CD8-positive, alpha-beta T cell (primary cell): ENCODE measurements at regions of chr1 and their contacts with region 1.

Region 1: GRCh38 chr1:194295685-194296084 is 1109.3 kb upstream of the B3GALT2 start:
- DNase-seq: peak in 7 of 9 experiments; percentile 7 to 80 (median 39)
- ATAC-seq: peak; percentile 98
- H3K4me3 ChIP-seq: no peak overlapping the region
- H3K4me3 Mint-ChIP-seq: no peak overlapping the region
- H3K27ac ChIP-seq: no peak overlapping the region
- H3K27ac Mint-ChIP-seq: no peak overlapping the region
- H3K4me1 ChIP-seq: peaks cover 6% of the 10 kb centered on the region
- H3K4me1 Mint-ChIP-seq: peaks cover 14% of the 10 kb centered on the region
- H3K27me3 ChIP-seq: no peaks in the 10 kb centered on the region
- H3K27me3 Mint-ChIP-seq: no peaks in the 10 kb centered on the region
- CTCF ChIP-seq: peak; percentile 75

Region 2: GRCh38 chr1:192609110-192610079 is 1686.3 kb before region 1 on chr1:
- CTCF ChIA-PET with region 1: no interaction called
- POLR2A ChIA-PET with region 1: no interaction called
- intact Hi-C with region 1: loop called in 1 of 2 experiments (anchors 10 kb)
- DNase-seq: peak; percentile 24 to 88 (median 58)
- ATAC-seq: peak; percentile 95
- H3K4me3 ChIP-seq: no peak overlapping the region
- H3K4me3 Mint-ChIP-seq: peak overlapping the region; percentile 69
- H3K27ac ChIP-seq: peak overlapping the region; percentile 20 to 57
- H3K27ac Mint-ChIP-seq: peak overlapping the region; percentile 86
- H3K4me1 ChIP-seq: peaks cover 14% of the 10 kb centered on the region
- H3K4me1 Mint-ChIP-seq: peaks cover 16% of the 10 kb centered on the region
- H3K27me3 ChIP-seq: peaks cover 0 to 3% of the 10 kb centered on the region in 2 experiments
- H3K27me3 Mint-ChIP-seq: no peaks in the 10 kb centered on the region
- CTCF ChIP-seq: no peak

Region 3: DNA sequence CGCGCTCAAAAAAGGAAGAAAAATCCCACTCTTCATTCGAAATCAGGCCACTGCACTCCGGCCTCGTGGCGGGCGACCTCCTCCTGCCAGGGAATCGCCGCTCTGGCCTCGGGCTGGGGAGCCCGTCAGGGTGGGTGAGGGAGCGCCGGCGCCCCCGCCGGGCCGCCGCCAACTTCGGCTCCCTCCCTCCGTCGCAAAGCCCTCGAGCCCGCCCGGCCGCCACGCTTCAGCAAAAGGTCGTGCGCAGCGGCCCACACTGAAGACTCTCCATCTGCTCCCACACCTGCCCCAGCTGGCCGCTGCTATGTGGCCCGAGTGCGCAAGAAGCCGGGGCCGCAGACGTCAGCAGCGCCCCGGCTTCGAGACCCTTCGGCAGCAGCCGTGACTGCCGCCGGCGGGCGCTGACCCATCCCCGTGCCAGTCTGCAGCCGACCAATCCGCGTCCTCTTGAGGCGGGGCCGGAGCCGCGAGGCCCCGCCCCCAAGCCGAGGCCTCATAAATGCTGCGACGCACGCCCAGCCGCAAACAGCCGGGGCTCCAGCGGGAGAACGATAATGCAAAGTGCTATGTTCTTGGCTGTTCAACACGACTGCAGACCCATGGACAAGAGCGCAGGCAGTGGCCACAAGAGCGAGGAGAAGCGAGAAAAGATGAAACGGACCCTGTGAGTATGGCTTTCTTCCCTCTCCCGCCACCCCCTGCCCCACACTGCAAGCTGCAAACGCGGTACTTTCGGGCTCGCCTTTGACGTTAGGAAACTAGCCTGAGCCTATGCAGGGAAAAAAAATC is 1487.0 kb before region 1 on chr1 and contains the start of gene RGS2:
- CTCF ChIA-PET with region 1: no interaction called
- POLR2A ChIA-PET with region 1: no interaction called
- intact Hi-C with region 1: loop called (anchors 2 to 5 kb)
- DNase-seq: peak; percentile 80 to 95 (median 87)
- ATAC-seq: peak; percentile 88
- H3K4me3 ChIP-seq: peak within 1 kb of the TSS; percentile 69 to 96
- H3K4me3 Mint-ChIP-seq: peak within 1 kb of the TSS; percentile 97
- H3K27ac ChIP-seq: peak within 1 kb of the TSS; percentile 66 to 81
- H3K27ac Mint-ChIP-seq: peak within 1 kb of the TSS; percentile 96
- H3K4me1 ChIP-seq: peaks cover 20% of the 10 kb centered on the region
- H3K4me1 Mint-ChIP-seq: peaks cover 29% of the 10 kb centered on the region
- H3K27me3 ChIP-seq: no peaks in the 10 kb centered on the region
- H3K27me3 Mint-ChIP-seq: no peaks in the 10 kb centered on the region
- CTCF ChIP-seq: no peak
- total RNA-seq, gene RGS2: 221 to 234 TPM

Region 4: DNA sequence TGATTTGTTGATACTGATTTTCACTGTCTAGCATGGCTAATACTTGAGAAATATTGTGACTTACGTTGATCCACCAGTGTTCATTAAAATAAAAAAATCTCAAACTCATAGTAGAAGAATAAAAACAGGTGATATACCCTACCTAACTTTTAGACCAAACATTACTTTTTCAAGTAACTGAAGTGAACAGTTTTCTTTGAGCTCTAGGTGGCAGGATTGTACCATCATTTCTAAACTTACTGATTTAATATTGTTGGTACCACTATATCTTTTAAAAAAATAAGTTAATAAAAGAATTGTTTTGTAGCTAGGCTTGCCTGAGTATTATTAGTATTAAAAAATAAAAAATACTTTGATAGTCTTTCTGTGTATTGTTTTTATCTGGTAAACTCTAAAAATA is 1152.4 kb before region 1 on chr1:
- CTCF ChIA-PET with region 1: interaction called, 4 read pairs
- POLR2A ChIA-PET with region 1: no interaction called
- intact Hi-C with region 1: loop called in 1 of 2 experiments (anchors 1 kb)
- DNase-seq: peak in 1 of 9 experiments; percentile 28
- ATAC-seq: no peak
- H3K4me3 ChIP-seq: no peak overlapping the region
- H3K4me3 Mint-ChIP-seq: no peak overlapping the region
- H3K27ac ChIP-seq: no peak overlapping the region
- H3K27ac Mint-ChIP-seq: no peak overlapping the region
- H3K4me1 ChIP-seq: no peaks in the 10 kb centered on the region
- H3K4me1 Mint-ChIP-seq: peaks cover 17% of the 10 kb centered on the region
- H3K27me3 ChIP-seq: no peaks in the 10 kb centered on the region
- H3K27me3 Mint-ChIP-seq: no peaks in the 10 kb centered on the region
- CTCF ChIP-seq: peak; percentile 23

Region 5: GRCh38 chr1:193260896-193261295 is 1034.8 kb before region 1 on chr1:
- CTCF ChIA-PET with region 1: no interaction called
- POLR2A ChIA-PET with region 1: no interaction called
- intact Hi-C with region 1: loop called (anchors 10 kb)
- DNase-seq: no peak
- ATAC-seq: no peak
- H3K4me3 ChIP-seq: no peak overlapping the region
- H3K4me3 Mint-ChIP-seq: no peak overlapping the region
- H3K27ac ChIP-seq: no peak overlapping the region
- H3K27ac Mint-ChIP-seq: no peak overlapping the region
- H3K4me1 ChIP-seq: no peaks in the 10 kb centered on the region
- H3K4me1 Mint-ChIP-seq: peaks cover 2% of the 10 kb centered on the region
- H3K27me3 ChIP-seq: no peaks in the 10 kb centered on the region
- H3K27me3 Mint-ChIP-seq: no peaks in the 10 kb centered on the region
- CTCF ChIP-seq: no peak

Region 6: DNA sequence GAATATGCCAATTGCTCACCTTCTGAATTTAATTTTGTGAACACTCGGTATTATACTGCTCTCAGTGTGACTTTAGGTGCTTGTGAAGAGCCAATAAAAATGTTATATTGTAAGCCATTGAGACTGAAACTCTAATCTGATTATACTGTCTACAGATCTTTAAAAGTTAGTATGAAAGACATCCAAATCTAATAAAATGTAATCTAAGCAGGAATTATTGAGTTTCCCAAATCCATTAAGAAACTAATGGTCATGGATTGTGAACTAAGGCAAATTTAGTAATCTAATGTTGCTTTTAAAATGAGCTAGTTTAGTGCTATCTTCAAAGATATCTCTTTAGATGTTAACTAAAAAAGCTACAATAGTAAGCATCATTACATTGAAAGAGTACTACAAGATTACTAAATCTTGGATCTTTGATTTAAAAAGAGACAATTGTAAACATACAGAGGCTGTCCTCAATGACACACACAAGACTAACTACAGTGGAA is 23.1 kb after region 1 on chr1:
- CTCF ChIA-PET with region 1: no interaction called
- POLR2A ChIA-PET with region 1: no interaction called
- intact Hi-C with region 1: no loop called
- DNase-seq: no peak
- ATAC-seq: no peak
- H3K4me3 ChIP-seq: no peak overlapping the region
- H3K4me3 Mint-ChIP-seq: no peak overlapping the region
- H3K27ac ChIP-seq: no peak overlapping the region
- H3K27ac Mint-ChIP-seq: no peak overlapping the region
- H3K4me1 ChIP-seq: no peaks in the 10 kb centered on the region
- H3K4me1 Mint-ChIP-seq: no peaks in the 10 kb centered on the region
- H3K27me3 ChIP-seq: no peaks in the 10 kb centered on the region
- H3K27me3 Mint-ChIP-seq: no peaks in the 10 kb centered on the region
- CTCF ChIP-seq: no peak

Region 7: DNA sequence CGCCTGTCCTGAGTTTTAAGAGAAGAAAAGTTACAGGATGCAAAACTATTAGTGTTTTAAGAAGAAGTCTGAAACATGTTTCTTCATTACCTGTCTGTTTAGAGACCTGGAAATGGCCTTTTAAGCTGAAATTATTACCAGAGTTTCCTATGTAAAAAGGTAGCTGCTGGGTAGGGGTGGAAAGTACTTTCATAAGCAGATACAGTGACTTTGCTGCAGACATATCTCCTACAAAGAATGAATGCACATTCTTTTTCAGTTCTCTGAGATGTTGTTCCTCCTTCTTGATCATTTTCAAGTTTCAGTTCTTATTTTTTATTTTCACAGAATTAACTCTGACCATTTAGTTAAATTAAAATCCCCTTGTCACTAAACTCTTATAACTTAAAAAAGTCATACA is 983.0 kb after region 1 on chr1:
- CTCF ChIA-PET with region 1: no interaction called
- POLR2A ChIA-PET with region 1: no interaction called
- intact Hi-C with region 1: no loop called
- DNase-seq: no peak
- ATAC-seq: no peak
- H3K4me3 ChIP-seq: no peak overlapping the region
- H3K4me3 Mint-ChIP-seq: no peak overlapping the region
- H3K27ac ChIP-seq: no peak overlapping the region
- H3K27ac Mint-ChIP-seq: no peak overlapping the region
- H3K4me1 ChIP-seq: no peaks in the 10 kb centered on the region
- H3K4me1 Mint-ChIP-seq: no peaks in the 10 kb centered on the region
- H3K27me3 ChIP-seq: no peaks in the 10 kb centered on the region
- H3K27me3 Mint-ChIP-seq: no peaks in the 10 kb centered on the region
- CTCF ChIP-seq: no peak